Prostate gland (tissue), 2 donors: ENCODE measurements at regions of chr6 and their contacts with region 1.

Region 1: GRCh38 chr6:157814883-157815282 is 8.2 kb upstream of the SNX9 start:
- DNase-seq: no peak
- H3K4me3 ChIP-seq: no peak overlapping the region
- H3K27ac ChIP-seq: no peak overlapping the region
- H3K4me1 ChIP-seq: no peaks in the 10 kb centered on the region
- H3K27me3 ChIP-seq: no peaks in the 10 kb centered on the region
- CTCF ChIP-seq: no peak
- POLR2A ChIP-seq: no peak

Region 2: DNA sequence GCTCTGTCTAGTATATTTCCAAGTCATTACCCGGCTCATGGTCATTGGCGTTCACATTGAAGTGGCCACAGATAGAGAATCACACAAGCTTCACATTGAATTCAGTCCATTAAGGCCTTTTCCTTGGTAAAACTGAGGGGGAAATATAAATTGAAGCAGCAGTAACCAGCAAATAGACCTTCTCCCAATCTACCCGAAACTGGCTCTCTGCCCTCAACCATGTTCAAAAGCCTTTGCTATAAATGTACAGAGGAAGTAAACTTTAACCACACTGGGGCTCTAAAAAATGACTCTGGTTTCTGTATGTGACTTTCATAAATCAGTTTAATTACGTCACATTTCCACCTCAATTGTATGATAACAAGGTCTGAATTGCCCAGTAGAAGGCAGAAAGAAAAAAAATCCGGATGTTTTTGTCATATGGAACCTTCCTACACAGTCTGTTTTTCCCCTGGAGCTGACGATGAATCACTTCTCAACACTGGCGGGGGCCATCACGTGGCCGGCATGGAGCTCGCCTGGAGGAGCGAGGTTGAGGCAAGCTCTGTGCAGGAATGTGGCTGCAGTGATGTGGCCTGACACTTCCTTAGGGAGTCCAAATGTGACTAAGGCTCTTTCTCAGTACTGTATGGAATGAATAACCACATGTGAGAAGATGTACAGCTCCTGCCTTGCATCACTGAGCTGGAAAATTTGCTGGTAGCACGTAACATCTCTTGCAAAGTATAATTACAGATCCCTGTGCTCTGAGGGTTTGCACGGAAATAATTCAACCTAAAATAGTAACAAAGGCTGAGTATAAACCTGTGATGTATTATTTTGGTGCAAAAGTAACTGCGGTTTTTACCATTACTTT is 50.5 kb before region 1 on chr6:
- intact Hi-C with region 1: loop called (anchors 5 kb)
- DNase-seq: peak; percentile 70
- H3K4me3 ChIP-seq: no peak overlapping the region
- H3K27ac ChIP-seq: peak overlapping the region; percentile 2 to 44
- H3K4me1 ChIP-seq: peaks cover 5% of the 10 kb centered on the region
- H3K27me3 ChIP-seq: no peaks in the 10 kb centered on the region
- CTCF ChIP-seq: no peak
- POLR2A ChIP-seq: no peak